ENCODE measurements at regions of chr1 and their contacts with region 1.

Region 1: DNA sequence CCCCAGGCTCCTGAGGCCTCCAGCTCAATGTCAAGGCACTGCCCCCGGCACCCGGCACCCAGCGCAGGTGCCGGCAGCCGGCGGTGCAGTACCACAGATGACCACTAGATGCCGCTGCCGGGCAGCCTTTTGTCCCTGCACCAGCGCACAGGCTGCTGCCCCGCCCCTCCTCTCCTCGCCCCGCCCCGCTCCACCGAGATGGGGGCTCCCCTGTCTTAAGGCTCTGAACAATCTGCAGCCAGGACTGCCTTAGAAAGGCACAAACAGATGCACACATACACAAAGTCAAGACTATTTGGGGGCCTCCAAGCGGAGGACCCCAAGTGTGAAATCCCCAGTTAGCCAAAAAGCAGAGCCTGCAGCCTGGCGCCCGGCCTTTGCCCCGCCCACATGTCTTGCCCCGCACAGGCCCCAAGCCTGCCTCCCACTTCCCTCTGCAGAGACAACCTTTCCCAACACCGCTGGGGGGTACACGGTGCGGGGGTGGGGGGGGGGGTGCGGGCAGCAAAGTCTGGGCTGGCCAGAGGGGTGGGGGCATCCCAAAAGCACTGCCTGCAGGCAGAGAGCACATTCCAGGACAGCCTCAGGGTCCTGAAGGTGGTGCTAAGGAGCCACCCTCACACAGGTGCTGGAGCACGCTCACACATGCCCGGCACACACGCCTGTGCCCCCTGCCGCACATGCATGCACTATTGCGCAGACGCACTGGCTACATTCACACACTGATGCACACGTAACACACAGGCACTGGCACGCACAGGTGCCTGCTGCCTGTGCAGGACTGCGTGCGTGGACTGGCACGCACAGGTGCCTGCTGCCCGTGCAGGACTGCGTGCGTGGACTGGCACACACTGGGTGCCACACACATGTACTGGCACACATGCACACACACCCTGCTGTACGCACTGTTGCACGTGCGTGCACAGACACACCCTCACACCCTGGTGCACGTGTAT is 37.1 kb downstream of the ARHGEF16 start:
- DNase-seq: no peak
- H3K4me3 ChIP-seq: no peak overlapping the region; the same call in 1 of the 2 replicates
- CTCF ChIP-seq: peak; percentile 91

Region 2: DNA sequence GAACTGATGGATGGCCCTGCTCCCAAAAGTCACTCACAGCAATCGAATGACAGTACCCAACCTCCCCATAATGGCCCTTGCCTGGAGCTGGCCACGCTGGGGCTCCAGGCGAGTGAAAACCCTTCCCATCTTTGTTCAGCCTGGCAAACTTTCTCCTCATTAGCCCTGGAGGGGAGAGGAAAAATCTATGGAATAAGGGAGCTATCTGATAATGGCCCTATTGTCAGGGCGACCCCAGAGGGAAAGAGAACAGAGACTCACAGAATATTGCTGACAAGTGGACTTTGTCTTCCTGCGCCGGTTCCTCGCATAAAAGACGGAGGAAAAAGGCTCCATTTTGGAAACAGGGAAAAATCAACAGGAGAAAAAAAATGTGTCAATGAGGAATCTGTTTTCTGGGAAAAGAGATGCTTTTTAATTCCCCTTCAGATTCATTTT is 50.1 kb before region 1 on chr1:
- CTCF ChIA-PET with region 1: no interaction called
- POLR2A ChIA-PET with region 1: no interaction called
- DNase-seq: no peak
- H3K4me3 ChIP-seq: no peak overlapping the region
- CTCF ChIP-seq: no peak

Region 3: GRCh38 chr1:3465655-3466321 is 25.8 kb before region 1 on chr1:
- CTCF ChIA-PET with region 1: interaction called, 11 read pairs
- POLR2A ChIA-PET with region 1: no interaction called
- DNase-seq: no peak
- H3K4me3 ChIP-seq: no peak overlapping the region
- CTCF ChIP-seq: no peak

Region 4: DNA sequence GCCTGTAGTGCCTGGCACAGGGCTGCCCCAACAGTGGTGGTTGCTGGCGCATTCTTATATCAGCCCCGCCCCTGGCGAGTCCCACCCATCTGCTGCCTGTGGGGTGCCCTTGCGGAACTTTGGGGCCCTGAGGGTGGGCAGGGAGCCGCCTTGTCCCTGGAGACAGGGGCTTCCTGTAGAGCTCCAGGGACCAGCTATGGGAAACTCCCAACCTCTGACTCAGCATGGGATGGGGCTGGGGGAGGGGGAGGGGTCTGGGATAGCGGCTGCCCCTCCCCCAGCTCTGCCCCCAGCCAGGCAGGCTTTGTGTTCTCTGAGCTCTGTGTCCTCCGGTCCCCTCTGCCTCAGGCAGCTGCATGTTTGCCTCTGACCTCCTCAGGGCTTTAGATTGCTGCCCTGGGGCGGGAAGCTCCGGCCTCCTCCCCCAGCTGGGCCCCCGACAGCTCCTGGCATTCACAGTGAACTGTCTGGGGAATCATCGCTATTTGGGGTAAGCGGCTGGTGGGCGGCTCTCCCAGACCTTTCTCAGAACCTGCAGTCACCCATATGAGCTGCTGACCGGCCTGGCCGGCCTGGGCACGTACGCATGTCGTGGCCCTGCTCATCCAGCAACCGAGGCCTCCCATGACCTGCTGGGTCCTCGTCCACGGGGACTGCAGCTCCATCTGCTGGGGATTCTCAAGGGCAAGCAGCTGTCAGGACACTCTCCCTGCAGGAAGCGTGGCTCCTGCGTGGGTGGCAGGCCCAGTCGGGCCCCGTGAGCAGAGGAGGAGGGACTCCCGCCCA is 20.1 kb before region 1 on chr1:
- CTCF ChIA-PET with region 1: interaction called, 13 read pairs
- POLR2A ChIA-PET with region 1: no interaction called
- DNase-seq: no peak
- H3K4me3 ChIP-seq: no peak overlapping the region
- CTCF ChIP-seq: peak; percentile 69

Region 5: DNA sequence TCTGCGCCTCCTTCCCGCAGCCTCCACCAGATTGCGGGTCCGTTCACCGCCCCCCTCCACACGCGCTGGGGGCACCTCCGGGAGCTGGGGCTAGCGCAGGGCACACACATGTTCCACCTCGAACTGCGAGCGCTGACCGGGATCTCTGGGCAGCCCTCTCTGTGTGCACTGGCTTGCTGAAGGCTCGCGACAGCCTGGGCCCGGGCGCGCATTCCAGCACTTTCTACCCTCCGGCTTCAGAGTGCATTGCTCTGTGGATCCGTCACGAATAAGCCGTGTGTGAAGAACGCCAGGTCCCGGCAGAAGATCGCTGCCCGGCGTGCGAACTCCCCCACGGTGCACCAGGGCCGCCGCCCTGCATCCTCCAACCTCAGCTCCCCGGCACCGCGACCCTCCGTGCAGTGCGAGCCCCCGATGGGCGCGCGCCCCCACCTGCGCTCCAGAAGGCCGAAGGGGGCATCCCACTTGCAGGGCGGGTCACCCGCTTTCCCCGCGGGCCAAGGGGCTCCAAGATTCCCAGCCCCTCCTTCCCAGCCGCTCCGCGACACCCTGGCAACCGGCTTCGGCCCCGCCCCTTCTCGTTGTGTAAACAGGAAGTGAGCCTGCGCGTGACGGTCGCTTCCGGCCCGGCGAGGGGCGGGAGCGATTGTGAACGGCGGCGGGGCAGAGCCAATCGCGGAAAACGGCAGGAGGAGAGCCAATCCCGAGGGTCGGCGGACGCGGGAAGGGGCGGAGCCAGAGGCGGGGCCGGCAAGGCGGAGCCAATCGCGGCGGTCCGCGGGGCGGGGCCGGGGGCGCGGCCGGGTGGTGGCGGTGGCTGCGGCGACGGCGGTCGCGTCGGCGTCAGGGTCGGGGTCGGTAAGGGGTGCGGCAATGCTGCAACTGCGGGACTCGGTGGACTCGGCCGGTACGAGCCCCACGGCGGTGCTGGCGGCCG is 132.9 kb after region 1 on chr1 and contains the start of gene TPRG1L:
- CTCF ChIA-PET with region 1: interaction called, 81 read pairs
- POLR2A ChIA-PET with region 1: no interaction called
- DNase-seq: peak; percentile 34
- H3K4me3 ChIP-seq: peak within 1 kb of the TSS; percentile 94
- CTCF ChIP-seq: no peak

Region 6: DNA sequence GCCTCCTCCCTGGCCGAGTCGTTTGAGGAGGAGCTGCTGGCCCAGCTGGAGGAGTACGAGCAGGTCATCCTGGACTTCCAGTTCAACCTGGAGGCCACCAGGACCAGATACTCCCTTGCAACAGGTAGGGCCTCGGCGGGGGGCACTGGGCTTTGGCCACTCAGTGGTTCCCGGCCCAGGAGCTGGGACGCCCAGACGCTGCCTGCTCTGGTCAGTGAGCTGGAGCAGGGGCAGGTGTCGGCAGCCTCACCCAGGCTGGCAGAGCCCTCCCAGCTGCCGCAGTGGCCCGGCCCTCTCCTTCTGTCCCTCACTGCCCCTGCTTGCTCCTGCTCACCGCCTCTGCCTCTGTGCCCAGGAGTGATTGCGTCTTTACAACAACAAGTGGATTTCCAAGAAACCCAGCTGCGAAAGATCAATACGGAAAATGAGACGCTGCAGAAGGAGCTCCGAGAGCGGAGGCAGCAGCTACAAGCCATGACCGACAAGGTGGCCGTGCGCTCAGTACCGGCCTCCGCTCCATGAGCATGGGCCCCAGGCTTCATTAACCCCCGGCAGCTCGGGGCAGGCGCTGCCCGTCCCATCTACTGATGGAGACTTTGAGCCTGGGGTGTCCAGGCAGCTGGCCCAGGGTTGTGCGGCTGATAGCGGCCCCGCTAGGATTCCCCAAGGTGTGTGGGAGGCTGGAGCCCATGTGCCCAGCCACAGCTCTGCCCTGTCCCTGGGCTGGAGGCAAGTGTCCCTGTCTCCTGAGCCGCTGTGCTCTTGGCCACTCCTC is 272.0 kb after region 1 on chr1:
- CTCF ChIA-PET with region 1: no interaction called
- POLR2A ChIA-PET with region 1: no interaction called
- DNase-seq: no peak
- H3K4me3 ChIP-seq: no peak overlapping the region
- CTCF ChIP-seq: no peak

Measured in AG04449 (cell line).